AG04449 (cell line): ENCODE measurements at regions of chr5 and their contacts with region 1.

Region 1: DNA sequence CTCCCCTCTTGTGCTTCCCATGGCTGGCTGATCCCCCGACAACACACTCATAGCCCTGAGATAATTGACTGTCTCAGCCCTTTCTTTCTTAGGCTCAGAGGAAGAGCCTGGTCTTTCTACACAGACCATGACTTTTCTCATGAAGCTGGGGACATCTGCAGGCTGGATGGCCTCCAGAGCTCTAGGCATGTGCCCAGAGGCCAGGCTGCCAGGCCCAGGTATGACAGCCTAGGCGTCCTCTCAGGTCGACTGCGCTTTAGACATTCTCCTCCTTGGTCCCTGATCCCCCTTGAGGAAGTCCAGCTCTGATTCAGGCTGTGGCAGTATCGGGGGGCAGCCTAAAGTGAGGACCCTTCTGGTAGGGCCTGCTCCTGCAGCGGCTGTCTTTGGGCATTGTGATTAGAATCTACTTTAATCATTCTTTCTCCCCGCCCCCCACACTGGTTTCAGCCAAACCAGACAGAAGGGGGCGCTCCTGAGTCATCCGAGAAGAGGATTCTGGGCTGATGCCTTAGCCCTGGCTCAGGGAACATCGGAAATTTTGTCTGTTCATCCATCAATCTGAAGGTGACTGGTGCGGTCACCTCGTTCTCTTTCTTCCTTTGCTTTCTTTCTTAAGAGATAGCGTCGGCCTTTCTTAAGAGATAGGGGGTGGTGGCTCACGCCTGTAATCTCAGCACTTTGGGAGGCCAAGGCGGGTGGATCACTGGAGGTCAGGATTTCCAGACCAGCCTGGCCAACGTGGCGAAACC is 66.5 kb upstream of the HSPA9 start:
- DNase-seq: no peak
- H3K4me3 ChIP-seq: no peak overlapping the region
- CTCF ChIP-seq: peak; percentile 76

Region 2: GRCh38 chr5:138654281-138654867 is 12.7 kb after region 1 on chr5:
- CTCF ChIA-PET with region 1: interaction called, 72 read pairs
- POLR2A ChIA-PET with region 1: no interaction called
- DNase-seq: no peak
- H3K4me3 ChIP-seq: no peak overlapping the region
- CTCF ChIP-seq: no peak

Region 3: DNA sequence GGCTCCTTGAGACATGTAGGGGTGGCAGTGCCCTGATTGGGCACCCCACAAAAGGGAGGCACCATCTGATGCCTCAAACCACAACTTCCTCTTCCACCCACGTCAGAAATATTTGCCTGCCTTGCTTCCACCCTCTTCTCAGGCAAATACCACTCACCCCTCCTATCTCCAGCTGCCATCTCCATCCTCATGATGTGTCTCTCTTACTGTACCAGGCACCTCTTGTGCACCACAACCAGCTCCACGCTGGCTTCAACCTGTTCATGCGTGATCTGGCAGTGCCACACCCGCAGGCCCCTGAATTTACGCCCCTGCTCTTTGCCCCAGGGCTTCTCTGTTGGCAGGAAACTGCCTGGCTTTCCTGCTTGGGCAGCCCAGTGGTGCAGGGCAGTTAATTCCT is 21.3 kb after region 1 on chr5:
- CTCF ChIA-PET with region 1: interaction called, 34 read pairs
- POLR2A ChIA-PET with region 1: no interaction called
- DNase-seq: no peak
- H3K4me3 ChIP-seq: no peak overlapping the region
- CTCF ChIP-seq: no peak

Region 4: DNA sequence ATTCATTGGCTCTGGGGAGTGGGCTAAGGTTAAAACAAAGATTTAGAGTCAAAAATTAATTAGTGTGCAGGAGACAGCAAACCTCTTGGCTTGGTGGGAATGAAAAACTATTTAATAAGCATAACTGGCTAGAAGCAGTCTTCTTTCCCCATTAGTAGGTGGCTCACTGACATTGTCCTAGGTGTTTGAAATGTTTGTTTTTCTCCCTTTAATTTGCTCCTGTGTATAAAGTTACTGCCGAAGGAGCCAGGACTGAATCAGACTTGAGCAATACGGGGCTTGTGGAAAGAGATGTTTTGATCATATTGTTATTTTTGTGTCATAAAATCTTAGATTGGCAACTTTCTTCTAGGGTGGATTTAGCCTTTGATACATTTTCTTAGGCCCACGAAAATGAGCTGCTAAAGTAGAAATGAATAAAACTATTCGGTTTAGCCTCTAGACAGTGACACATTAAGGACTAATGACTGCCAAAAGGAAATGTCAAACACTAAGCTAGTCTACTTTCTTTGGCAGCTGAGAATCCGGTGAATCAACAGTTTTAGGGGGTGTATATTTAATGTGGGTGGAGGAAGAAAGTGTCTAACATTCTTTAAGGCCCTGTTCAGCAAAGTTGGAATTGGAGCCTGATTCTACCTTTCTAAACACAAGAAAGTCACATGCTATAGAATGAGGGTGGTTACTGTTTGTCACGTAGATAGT is 203.2 kb after region 1 on chr5:
- CTCF ChIA-PET with region 1: no interaction called
- POLR2A ChIA-PET with region 1: no interaction called
- DNase-seq: peak; percentile 55
- H3K4me3 ChIP-seq: no peak overlapping the region
- CTCF ChIP-seq: no peak

Region 5: GRCh38 chr5:139262742-139263445 is 621.2 kb after region 1 on chr5:
- CTCF ChIA-PET with region 1: interaction called, 18 read pairs
- POLR2A ChIA-PET with region 1: no interaction called
- DNase-seq: peak; percentile 64
- H3K4me3 ChIP-seq: no peak overlapping the region
- CTCF ChIP-seq: peak; percentile 96